B cell (primary cell): ENCODE measurements at regions of chr1 and their contacts with region 1.

Region 1: GRCh38 chr1:161165742-161166668 is at the start of gene PPOX:
- DNase-seq: peak; percentile 95
- ATAC-seq: peak; percentile 94
- H3K4me3 ChIP-seq: peak within 1 kb of the TSS; percentile 48 to 82 (median 69)
- H3K4me3 Mint-ChIP-seq: peak within 1 kb of the TSS; percentile 91
- H3K27ac ChIP-seq: peak within 1 kb of the TSS; percentile 89 to 92
- H3K27ac Mint-ChIP-seq: peak within 1 kb of the TSS; percentile 99
- H3K4me1 ChIP-seq: peaks cover 20 to 26% of the 10 kb centered on the region in 2 donors
- H3K4me1 Mint-ChIP-seq: peaks cover 47% of the 10 kb centered on the region
- H3K27me3 ChIP-seq: no peaks in the 10 kb centered on the region
- H3K27me3 Mint-ChIP-seq: no peaks in the 10 kb centered on the region
- CTCF ChIP-seq: peak; percentile 68
- total RNA-seq, gene PPOX: 61.7 and 65.6 TPM in 2 replicates

Region 2: GRCh38 chr1:160951443-160952128 is 214.4 kb before region 1 on chr1:
- CTCF ChIA-PET with region 1: no interaction called
- POLR2A ChIA-PET with region 1: no interaction called
- intact Hi-C with region 1: no loop called
- DNase-seq: peak; percentile 81
- ATAC-seq: peak; percentile 81
- H3K4me3 ChIP-seq: no peak overlapping the region
- H3K4me3 Mint-ChIP-seq: no peak overlapping the region
- H3K27ac ChIP-seq: no peak overlapping the region
- H3K27ac Mint-ChIP-seq: no peak overlapping the region
- H3K4me1 ChIP-seq: peaks cover 0 to 4% of the 10 kb centered on the region in 2 donors
- H3K4me1 Mint-ChIP-seq: peaks cover 9% of the 10 kb centered on the region
- H3K27me3 ChIP-seq: no peaks in the 10 kb centered on the region
- H3K27me3 Mint-ChIP-seq: no peaks in the 10 kb centered on the region
- CTCF ChIP-seq: peak; percentile 85

Region 3: DNA sequence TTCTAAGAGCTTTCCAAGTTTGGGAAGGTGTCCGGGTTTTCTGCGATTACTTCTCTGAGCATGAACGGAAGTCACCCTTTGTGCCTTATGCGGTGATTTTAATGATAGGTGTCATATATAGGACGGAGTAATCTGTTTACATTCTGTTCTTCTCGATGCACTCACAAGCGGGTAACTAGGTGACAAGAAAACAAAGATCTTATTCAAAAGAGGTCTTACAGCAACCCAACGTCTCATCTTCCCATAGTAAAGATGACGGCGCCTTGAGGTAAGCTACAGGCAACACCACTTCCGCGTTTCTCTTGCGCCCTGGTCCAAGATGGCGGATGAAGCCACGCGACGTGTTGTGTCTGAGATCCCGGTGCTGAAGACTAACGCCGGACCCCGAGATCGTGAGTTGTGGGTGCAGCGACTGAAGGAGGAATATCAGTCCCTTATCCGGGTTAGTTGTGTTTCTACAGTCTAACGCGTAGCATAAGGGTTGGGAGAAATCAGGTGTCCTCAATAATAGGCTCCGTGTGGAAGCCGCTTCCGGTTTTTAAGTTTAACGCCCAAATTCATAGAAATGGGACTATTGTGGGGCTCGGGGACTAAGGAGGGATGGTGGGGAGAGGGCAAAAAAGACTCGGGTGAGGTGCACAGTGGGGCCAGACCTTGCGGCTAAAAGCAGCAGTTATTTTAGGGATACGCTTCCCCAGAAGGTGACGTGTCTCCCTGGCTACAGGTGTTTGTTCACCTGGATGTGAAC is 12.2 kb before region 1 on chr1 and contains the start of gene UFC1:
- CTCF ChIA-PET with region 1: interaction called, 11 read pairs
- POLR2A ChIA-PET with region 1: interaction called, 12 read pairs
- intact Hi-C with region 1: loop called (anchors 2 kb)
- DNase-seq: peak; percentile 94
- ATAC-seq: peak; percentile 97
- H3K4me3 ChIP-seq: peak within 1 kb of the TSS; percentile 88 to 100 (median 90)
- H3K4me3 Mint-ChIP-seq: peak within 1 kb of the TSS; percentile 97
- H3K27ac ChIP-seq: peak within 1 kb of the TSS; percentile 95 to 98
- H3K27ac Mint-ChIP-seq: peak within 1 kb of the TSS; percentile 99
- H3K4me1 ChIP-seq: peaks cover 15 to 17% of the 10 kb centered on the region in 2 donors
- H3K4me1 Mint-ChIP-seq: peaks cover 26% of the 10 kb centered on the region
- H3K27me3 ChIP-seq: no peaks in the 10 kb centered on the region
- H3K27me3 Mint-ChIP-seq: no peaks in the 10 kb centered on the region
- CTCF ChIP-seq: no peak
- total RNA-seq, gene UFC1: 78.1 and 91.0 TPM in 2 replicates

Region 4: GRCh38 chr1:161185282-161185682 is 19.3 kb after region 1 on chr1:
- CTCF ChIA-PET with region 1: interaction called, 29 read pairs
- POLR2A ChIA-PET with region 1: interaction called, 7 read pairs
- intact Hi-C with region 1: no loop called
- DNase-seq: peak; percentile 91
- ATAC-seq: peak; percentile 76
- H3K4me3 ChIP-seq: peak overlapping the region in 4 of 5 experiments; percentile 31 to 63 (median 36)
- H3K4me3 Mint-ChIP-seq: peak overlapping the region; percentile 71
- H3K27ac ChIP-seq: peak overlapping the region; percentile 86 to 94
- H3K27ac Mint-ChIP-seq: peak overlapping the region; percentile 93
- H3K4me1 ChIP-seq: peaks cover 73 to 93% of the 10 kb centered on the region in 2 donors
- H3K4me1 Mint-ChIP-seq: peaks cover 78% of the 10 kb centered on the region
- H3K27me3 ChIP-seq: no peaks in the 10 kb centered on the region
- H3K27me3 Mint-ChIP-seq: no peaks in the 10 kb centered on the region
- CTCF ChIP-seq: no peak

Region 5: DNA sequence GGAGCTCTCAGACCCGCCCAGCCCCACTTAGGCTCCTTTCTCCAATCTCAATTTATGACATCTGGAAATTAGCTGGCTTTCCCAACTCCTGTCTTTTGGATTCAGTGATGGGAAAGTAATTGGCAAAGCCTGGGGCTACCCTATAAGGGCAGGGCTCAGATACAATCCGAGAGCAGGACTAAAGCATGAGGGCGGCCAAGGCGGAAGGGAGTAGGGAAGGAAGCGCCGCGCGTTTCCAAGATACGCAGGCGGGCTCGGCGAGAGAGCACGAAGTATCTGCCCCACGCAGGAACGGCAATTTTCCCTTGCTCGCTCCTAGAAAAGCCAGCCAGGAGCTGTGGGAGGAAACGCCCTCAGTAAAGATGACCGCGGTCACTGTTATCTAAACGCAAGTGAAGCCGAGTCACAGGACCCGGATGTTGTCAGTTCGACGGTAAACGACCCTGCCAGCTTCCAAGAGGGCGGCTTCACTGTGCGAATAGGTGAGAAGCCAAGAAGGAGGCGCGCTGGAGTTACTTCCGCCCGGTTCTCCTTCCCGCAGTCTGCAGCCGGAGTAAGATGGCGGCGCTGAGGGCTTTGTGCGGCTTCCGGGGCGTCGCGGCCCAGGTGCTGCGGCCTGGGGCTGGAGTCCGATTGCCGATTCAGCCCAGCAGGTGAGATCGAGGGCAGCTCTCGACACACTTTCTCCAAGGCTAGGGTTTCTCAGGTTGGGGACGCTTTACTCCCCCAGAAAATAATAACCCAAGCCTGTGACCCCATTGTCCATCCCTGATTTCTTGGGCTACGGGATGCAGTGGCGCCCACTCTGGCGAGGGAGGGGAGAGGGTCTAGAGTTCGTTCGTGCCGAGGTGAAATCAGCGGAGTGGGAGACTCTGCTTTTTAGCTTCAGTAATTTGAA is 36.1 kb after region 1 on chr1 and contains the start of gene NDUFS2:
- CTCF ChIA-PET with region 1: interaction called, 23 read pairs
- POLR2A ChIA-PET with region 1: interaction called, 3 read pairs
- intact Hi-C with region 1: loop called (anchors 1 kb)
- DNase-seq: peak; percentile 97
- ATAC-seq: peak; percentile 98
- H3K4me3 ChIP-seq: peak within 1 kb of the TSS; percentile 77 to 99 (median 88)
- H3K4me3 Mint-ChIP-seq: peak within 1 kb of the TSS; percentile 96
- H3K27ac ChIP-seq: peak within 1 kb of the TSS; percentile 81 to 88
- H3K27ac Mint-ChIP-seq: peak within 1 kb of the TSS; percentile 97
- H3K4me1 ChIP-seq: peaks cover 16 to 26% of the 10 kb centered on the region in 2 donors
- H3K4me1 Mint-ChIP-seq: peaks cover 36% of the 10 kb centered on the region
- H3K27me3 ChIP-seq: no peaks in the 10 kb centered on the region
- H3K27me3 Mint-ChIP-seq: no peaks in the 10 kb centered on the region
- CTCF ChIP-seq: no peak
- total RNA-seq, gene NDUFS2: 80.2 and 82.3 TPM in 2 replicates

Region 6: GRCh38 chr1:161382214-161383019 is 216.4 kb after region 1 on chr1:
- CTCF ChIA-PET with region 1: interaction called, 47 read pairs
- POLR2A ChIA-PET with region 1: no interaction called
- intact Hi-C with region 1: no loop called
- DNase-seq: peak; percentile 68
- ATAC-seq: peak; percentile 86
- H3K4me3 ChIP-seq: no peak overlapping the region
- H3K4me3 Mint-ChIP-seq: no peak overlapping the region
- H3K27ac ChIP-seq: no peak overlapping the region
- H3K27ac Mint-ChIP-seq: no peak overlapping the region
- H3K4me1 ChIP-seq: peaks cover 3% of the 10 kb centered on the region in 2 donors
- H3K4me1 Mint-ChIP-seq: peaks cover 6% of the 10 kb centered on the region
- H3K27me3 ChIP-seq: no peaks in the 10 kb centered on the region
- H3K27me3 Mint-ChIP-seq: no peaks in the 10 kb centered on the region
- CTCF ChIP-seq: peak; percentile 85

Region 7: GRCh38 chr1:161549652-161550051 is 383.6 kb after region 1 on chr1 and contains the start of gene FCGR3A:
- CTCF ChIA-PET with region 1: no interaction called
- POLR2A ChIA-PET with region 1: no interaction called
- intact Hi-C with region 1: no loop called
- DNase-seq: no peak
- ATAC-seq: no peak
- H3K4me3 ChIP-seq: no peak within 1 kb of the TSS
- H3K4me3 Mint-ChIP-seq: no peak within 1 kb of the TSS
- H3K27ac ChIP-seq: no peak within 1 kb of the TSS
- H3K27ac Mint-ChIP-seq: no peak within 1 kb of the TSS
- H3K4me1 ChIP-seq: peaks cover 2 to 16% of the 10 kb centered on the region in 2 donors
- H3K4me1 Mint-ChIP-seq: peaks cover 13% of the 10 kb centered on the region
- H3K27me3 ChIP-seq: no peaks in the 10 kb centered on the region
- H3K27me3 Mint-ChIP-seq: no peaks in the 10 kb centered on the region
- CTCF ChIP-seq: no peak
- total RNA-seq, gene FCGR3A: 0.92 and 1.3 TPM in 2 replicates